Activated CD4-positive, alpha-beta T cell treated with anti-CD3 and anti-CD28 coated beads for 36 hours (primary cell): ENCODE measurements at regions of chr17 and their contacts with region 1.

Region 1: GRCh38 chr17:74759243-74759801 is 10.9 kb downstream of the NHERF1 start:
- DNase-seq: peak; percentile 71
- ATAC-seq: peak; percentile 78
- H3K4me3 Mint-ChIP-seq: peak overlapping the region; percentile 10
- H3K27ac Mint-ChIP-seq: peak overlapping the region; percentile 83
- H3K4me1 Mint-ChIP-seq: peaks cover 64% of the 10 kb centered on the region
- H3K27me3 Mint-ChIP-seq: no peaks in the 10 kb centered on the region

Region 2: DNA sequence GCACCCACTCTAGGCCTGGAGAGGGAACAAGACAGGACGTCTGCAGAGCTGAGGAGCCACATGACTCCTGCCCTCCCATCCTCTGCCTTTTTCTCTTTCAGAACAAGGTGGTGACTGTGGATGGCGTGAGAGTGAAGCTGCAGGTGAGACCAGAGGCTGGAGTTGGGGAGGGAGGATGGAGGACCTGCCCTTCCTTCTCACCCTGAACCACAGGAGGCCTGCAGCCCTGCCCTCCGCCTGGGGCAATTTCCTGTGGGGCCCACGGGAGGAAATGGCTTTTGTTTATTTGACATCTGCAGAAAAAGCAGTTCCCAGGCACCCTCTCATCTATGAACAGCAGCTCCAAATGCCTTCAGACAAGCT is 17.2 kb before region 1 on chr17:
- CTCF ChIA-PET with region 1: interaction called, 82 read pairs
- POLR2A ChIA-PET with region 1: interaction called, 6 read pairs
- intact Hi-C with region 1: loop called in 1 of 2 experiments (anchors 2 kb)
- DNase-seq: peak; percentile 72
- ATAC-seq: peak; percentile 13
- H3K4me3 Mint-ChIP-seq: peak overlapping the region; percentile 50
- H3K27ac Mint-ChIP-seq: peak overlapping the region; percentile 88
- H3K4me1 Mint-ChIP-seq: peaks cover 81% of the 10 kb centered on the region
- H3K27me3 Mint-ChIP-seq: no peaks in the 10 kb centered on the region

Region 3: DNA sequence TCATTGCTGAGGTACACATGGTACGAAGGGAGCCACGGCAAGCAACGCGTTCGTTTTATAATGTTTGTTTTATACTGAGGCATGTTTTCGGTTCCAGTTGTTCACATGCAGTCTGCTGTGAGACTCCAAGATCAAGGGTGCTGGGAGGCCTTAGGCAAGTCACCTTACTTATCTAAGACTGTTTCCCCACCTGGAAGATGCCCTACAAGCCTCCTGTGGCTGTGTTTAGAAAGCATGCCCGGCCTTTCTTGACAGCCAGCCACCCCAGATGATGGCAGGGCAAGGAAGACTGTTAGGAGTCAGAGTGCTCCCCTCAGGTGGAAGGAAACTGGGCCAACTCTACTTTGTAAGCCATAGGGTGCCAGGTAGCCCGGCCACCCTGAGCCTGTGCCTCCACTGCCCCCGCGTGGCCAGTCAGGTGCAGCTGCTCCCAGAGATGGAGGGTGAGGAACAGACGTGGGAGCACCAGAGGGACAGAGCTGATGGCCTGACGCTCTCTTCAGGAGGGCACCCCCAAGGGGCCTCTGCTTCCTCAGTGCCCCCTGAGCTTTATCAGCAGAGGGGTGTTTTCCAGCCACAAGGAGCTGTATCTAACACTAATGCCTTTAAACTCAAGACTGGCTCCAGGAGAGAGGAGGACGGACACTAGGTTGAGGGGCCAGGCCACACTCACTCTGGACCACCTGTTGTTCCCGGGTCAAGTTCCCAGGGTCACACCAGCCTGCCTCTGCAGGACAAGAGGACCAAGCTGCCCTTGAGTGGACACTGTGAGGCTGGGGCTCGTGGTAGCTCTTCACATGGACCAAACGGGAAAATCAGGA is 11.4 kb after region 1 on chr17:
- CTCF ChIA-PET with region 1: interaction called, 48 read pairs
- POLR2A ChIA-PET with region 1: interaction called, 3 read pairs
- intact Hi-C with region 1: no loop called
- DNase-seq: peak; percentile 84
- ATAC-seq: peak; percentile 93
- H3K4me3 Mint-ChIP-seq: no peak overlapping the region
- H3K27ac Mint-ChIP-seq: peak overlapping the region; percentile 60
- H3K4me1 Mint-ChIP-seq: peaks cover 23% of the 10 kb centered on the region
- H3K27me3 Mint-ChIP-seq: no peaks in the 10 kb centered on the region